Left lung (tissue), 14 donors: ENCODE measurements at regions of chr21 and their contacts with region 1.

Region 1: GRCh38 chr21:35309316-35309715 is 260.2 kb upstream of the RUNX1 start:
- DNase-seq: no peak
- ATAC-seq: peak; percentile 37
- H3K4me3 ChIP-seq: no peak overlapping the region
- H3K27ac ChIP-seq: no peak overlapping the region
- H3K4me1 ChIP-seq: no peaks in the 10 kb centered on the region
- H3K27me3 ChIP-seq: no peaks in the 10 kb centered on the region
- CTCF ChIP-seq: no peak

Region 2: GRCh38 chr21:35217504-35218060 is 91.7 kb before region 1 on chr21:
- intact Hi-C with region 1: no loop called
- DNase-seq: peak in 1 of 4 donors; percentile 39
- ATAC-seq: peak; percentile 84
- H3K4me3 ChIP-seq: no peak overlapping the region
- H3K27ac ChIP-seq: peak overlapping the region in 1 of 2 donors; percentile 37
- H3K4me1 ChIP-seq: peaks cover 0 to 5% of the 10 kb centered on the region in 2 donors
- H3K27me3 ChIP-seq: no peaks in the 10 kb centered on the region
- CTCF ChIP-seq: no peak

Region 3: GRCh38 chr21:35614396-35614901 is 305.1 kb after region 1 on chr21:
- intact Hi-C with region 1: loop called in 1 of 2 experiments (anchors 5 kb)
- DNase-seq: no peak
- ATAC-seq: no peak
- H3K4me3 ChIP-seq: no peak overlapping the region
- H3K27ac ChIP-seq: no peak overlapping the region
- H3K4me1 ChIP-seq: peaks cover 0 to 11% of the 10 kb centered on the region in 2 donors
- H3K27me3 ChIP-seq: peaks cover 0 to 3% of the 10 kb centered on the region in 2 donors
- CTCF ChIP-seq: no peak